PC-9 (cell line): ENCODE measurements at regions of chr14 and their contacts with region 1.

Region 1: DNA sequence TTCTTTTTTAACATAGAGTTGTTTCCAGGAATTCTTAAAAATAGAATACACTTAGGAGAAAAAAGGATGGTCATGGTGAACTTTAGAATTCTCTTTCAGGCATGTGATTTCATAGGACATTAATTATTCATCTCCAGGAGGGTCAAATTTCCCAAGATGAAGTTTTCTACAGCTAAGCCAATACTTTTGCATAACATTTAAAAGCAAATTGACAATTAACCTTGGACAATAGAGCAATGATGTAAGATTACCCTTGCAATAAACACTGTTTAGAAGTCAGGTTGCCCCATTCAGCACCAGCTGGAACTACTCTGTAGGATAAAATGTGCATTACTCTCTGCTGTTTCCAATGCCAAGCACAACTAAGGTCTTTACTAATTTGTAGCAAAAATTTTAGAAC is 49.5 kb downstream of the SIX1 start:
- DNase-seq: no peak
- H3K4me3 ChIP-seq: no peak overlapping the region
- H3K27ac ChIP-seq: no peak overlapping the region
- H3K4me1 ChIP-seq: no peaks in the 10 kb centered on the region
- H3K27me3 ChIP-seq: no peaks in the 10 kb centered on the region
- CTCF ChIP-seq: no peak

Region 2: GRCh38 chr14:58731465-58732330 is 1868.0 kb before region 1 on chr14:
- CTCF ChIA-PET with region 1: no interaction called
- POLR2A ChIA-PET with region 1: no interaction called
- intact Hi-C with region 1: no loop called
- DNase-seq: no peak
- H3K4me3 ChIP-seq: no peak overlapping the region
- H3K27ac ChIP-seq: peak overlapping the region; percentile 38
- H3K4me1 ChIP-seq: no peaks in the 10 kb centered on the region
- H3K27me3 ChIP-seq: no peaks in the 10 kb centered on the region
- CTCF ChIP-seq: no peak

Region 3: DNA sequence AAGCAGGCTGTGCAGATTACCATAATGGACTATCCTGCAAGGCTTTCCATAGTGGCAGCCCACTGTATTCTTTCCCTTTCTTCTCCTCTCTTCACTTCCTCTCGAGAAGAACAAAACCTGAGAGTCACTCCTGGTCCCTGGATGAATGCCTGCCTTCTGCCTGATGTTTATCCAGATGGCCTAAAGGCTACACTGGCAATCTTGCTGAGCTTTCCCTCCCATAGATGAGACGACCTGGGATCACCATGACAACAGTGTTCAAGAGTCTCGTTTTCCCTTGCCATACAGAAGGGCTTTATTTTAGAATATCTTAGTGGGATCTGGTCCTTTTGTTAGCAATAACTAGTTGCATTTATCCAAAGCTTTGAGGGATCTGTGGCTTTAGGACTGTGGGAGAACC is 871.4 kb before region 1 on chr14:
- CTCF ChIA-PET with region 1: no interaction called
- POLR2A ChIA-PET with region 1: interaction called, 11 read pairs
- intact Hi-C with region 1: no loop called
- DNase-seq: no peak
- H3K4me3 ChIP-seq: no peak overlapping the region
- H3K27ac ChIP-seq: no peak overlapping the region
- H3K4me1 ChIP-seq: no peaks in the 10 kb centered on the region
- H3K27me3 ChIP-seq: no peaks in the 10 kb centered on the region
- CTCF ChIP-seq: no peak